AG04449 (cell line): ENCODE measurements at regions of chr19 and their contacts with region 1.

Region 1: DNA sequence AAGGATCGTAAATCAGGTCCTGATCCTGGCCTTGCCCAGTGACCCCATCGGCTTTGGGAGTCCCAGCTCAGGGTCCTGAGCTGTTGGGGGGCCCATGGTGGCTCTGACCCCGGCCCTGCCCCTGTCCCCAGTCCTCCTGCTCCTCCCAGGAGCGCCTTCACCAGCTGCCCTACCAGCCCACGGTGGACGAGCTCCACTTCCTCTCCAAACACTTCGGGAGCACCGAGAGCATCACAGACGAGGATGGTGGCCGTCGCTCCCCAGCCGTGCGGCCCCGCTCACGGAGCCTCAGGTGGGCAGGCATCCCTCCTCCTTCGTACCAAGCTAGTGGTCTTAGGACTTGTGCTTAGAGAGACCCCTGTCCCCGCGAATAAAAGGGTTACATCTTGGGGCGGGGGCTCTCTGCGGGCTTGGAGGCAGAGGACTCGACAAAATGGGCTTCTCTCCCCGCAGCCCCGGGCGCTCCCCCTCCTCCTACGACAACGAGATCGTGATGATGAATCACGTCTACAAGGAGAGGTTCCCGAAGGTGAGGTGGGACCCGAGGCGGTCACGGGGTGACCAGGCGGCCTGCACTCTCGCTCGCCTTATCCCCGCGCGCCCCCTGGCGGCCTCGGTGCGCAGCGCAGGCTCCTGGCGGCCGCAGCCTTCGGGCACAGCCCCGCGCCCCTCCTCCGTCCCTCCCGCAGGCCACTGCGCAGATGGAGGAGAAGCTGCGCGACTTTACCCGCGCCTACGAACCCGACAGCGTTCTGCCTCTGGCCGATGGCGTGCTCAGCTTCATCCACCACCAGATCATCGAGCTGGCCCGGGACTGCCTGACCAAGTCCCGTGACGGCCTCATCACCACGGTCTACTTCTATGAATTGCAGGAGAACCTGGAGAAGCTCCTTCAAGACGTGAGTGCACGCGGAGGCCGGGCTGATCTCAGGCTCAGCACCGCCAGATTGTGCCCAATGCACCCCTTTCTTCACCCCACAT is 9.1 kb downstream of the MAST1 start:
- DNase-seq: peak; percentile 5
- H3K4me3 ChIP-seq: peak overlapping the region; percentile 42
- CTCF ChIP-seq: peak; percentile 98

Region 2: DNA sequence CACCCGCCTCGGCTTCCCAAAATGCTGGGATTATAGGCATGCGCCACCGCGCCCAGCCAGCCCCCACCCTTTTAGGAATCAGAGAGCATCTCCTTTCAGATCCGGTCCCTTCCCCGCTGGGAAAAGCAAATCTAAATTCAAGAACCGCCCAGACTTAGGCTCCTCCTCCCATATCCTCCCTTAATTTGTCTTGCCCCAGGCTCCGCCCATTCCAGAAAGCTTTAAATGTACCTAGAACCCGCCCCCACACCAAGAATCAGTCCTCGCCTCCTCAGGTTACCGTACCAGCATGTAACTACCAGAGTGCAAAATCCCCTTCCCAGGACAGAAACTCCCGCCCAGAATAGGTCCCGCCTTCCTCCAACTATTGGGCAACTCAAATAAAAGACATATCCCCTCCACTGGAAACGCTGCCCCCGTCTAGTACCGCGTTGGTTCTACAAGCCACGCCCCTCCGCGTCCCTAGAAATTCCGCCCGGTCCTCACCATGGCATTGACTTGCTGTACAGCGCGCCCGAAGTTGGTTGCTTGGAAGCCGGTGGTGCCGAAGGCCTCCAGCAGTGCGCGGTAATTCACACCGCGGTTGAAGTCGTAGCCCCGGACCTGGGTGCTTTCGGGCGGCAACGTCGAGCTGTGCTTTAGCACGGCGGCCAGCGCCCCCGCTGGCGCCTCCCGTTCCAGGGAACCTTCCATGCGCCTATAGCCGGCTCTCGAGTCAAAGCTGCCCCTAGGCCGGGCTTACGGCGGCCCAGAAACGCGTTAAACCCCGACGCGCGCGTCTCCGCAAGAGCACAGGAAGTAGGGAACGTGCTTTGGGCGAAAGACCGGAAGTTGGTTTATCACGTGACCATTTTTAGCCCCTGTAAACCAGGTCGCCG is 166.1 kb before region 1 on chr19 and contains the start of gene DHPS:
- CTCF ChIA-PET with region 1: interaction called, 90 read pairs
- POLR2A ChIA-PET with region 1: no interaction called
- DNase-seq: peak; percentile 89
- H3K4me3 ChIP-seq: peak within 1 kb of the TSS; percentile 98
- CTCF ChIP-seq: no peak

Region 3: DNA sequence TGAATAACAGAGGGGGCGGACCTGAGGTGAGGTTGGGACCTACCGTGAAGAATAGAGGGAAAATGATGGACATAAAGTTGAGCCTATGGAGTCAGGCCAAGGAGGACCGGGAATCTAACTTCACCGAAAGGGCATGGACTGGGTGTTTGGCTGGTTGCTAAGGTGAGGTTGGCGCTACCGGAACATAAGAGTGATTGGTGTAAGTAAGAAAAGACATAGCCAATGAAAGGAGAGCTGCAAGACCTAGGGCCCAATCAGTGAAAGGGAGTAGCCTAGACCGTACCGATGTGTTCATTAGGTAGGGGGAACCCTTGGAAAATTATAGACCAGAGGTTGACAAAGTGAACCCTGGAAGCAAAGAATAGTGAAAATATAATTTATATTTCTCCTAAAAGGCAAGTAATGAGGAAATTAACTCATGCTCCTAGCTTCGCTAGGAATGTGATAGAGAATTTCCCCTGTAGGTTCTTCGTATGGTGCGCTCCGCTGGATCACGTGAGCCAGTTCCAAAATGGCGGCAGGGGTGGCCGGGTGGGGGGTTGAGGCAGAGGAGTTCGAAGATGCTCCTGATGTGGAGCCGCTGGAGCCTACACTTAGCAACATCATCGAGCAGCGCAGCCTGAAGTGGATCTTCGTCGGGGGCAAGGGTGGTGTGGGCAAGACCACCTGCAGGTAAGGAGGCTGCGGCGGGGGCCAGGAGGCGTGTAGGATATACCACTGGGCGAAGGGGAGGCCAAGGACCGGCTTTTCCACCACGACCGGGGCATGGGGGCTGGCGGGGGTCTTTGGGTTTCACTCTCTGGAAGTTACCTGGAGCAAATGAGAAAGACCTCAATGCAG is 110.2 kb before region 1 on chr19 and contains the start of gene GET3:
- CTCF ChIA-PET with region 1: interaction called, 12 read pairs
- POLR2A ChIA-PET with region 1: no interaction called
- DNase-seq: peak; percentile 100
- H3K4me3 ChIP-seq: peak within 1 kb of the TSS; percentile 93
- CTCF ChIP-seq: no peak

Region 4: DNA sequence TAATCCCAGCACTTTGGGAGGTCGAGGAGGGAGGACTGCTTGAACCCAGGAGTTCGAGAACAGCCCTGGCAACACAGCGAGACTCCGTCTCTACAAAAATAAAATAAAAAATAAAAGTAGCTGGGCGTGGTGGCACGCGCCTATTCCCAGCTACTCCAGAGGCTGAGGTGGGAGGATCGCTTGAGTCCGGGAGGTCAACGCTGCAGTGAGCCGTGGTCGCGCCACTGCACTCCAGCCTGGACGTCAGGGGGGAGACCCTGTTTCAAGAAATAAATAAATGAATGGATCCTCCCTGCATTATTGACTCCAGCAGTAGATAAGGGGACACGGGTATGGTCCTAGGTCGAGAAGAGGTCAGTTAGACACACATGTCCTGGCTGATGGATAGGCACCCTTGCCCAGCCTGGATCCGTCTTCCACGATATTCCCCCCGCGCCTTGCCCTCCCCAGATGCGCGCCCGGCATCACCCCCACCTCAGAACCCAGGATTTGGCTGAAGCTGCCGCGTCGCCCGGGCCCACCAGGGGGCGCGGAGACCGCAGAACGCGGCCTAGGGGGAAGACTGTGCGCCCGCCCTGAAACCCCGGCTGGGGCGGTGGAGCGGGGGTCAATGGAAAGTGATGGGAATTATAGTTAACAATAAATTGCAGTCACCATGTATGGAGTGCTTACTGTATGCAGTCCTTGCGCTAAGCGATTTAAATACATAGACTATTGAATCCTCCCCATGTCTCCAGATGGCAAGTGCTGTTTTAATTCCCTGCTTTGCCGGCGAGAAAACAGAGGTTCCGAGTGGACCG is 70.0 kb before region 1 on chr19:
- CTCF ChIA-PET with region 1: interaction called, 42 read pairs
- POLR2A ChIA-PET with region 1: no interaction called
- DNase-seq: no peak
- H3K4me3 ChIP-seq: peak overlapping the region; percentile 67
- CTCF ChIP-seq: peak; percentile 99

Region 5: GRCh38 chr19:12825254-12826131 is 22.0 kb before region 1 on chr19:
- CTCF ChIA-PET with region 1: interaction called, 23 read pairs
- POLR2A ChIA-PET with region 1: no interaction called
- DNase-seq: no peak
- H3K4me3 ChIP-seq: peak overlapping the region; percentile 12; the same call in 1 of the 2 replicates
- CTCF ChIP-seq: peak; percentile 46

Region 6: DNA sequence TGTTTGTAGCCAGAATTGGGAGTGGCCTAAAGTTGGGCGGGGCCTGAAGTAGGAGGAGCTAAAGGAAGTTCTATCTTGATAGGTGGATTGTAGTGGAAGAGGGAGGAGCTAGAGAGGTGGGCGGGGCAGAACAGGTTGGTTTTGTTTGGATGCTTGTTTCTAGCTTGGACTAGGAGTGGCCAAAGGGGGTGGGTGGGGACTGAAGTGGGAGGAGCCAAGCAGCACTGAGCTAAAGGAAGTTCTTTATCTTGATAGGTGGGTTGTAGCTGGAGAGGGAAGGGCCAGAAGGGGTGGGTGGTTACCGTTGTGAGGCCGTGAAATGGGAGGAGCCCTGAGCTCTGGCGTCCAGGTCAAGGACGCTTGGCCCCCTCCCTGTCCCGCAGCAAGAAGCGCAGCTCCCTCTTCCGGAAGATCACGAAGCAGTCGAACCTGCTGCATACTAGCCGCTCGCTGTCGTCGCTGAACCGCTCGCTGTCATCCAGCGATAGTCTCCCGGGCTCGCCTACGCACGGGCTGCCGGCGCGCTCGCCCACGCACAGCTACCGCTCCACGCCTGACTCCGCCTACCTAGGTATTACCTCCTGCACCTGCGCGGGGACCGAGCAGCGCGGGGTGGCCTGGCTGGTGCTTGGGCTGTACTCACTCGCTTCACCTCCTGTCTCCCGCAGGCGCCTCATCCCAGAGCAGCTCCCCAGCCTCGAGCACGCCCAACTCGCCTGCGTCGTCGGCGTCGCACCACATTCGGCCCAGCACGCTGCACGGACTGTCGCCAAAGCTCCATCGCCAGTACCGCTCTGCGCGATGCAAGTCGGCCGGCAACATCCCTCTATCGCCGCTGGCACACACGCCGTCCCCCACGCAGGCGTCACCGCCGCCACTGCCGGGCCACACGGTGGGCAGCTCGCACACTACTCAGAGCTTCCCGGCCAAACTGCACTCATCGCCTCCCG is 25.8 kb after region 1 on chr19:
- CTCF ChIA-PET with region 1: interaction called, 14 read pairs
- POLR2A ChIA-PET with region 1: no interaction called
- DNase-seq: no peak
- H3K4me3 ChIP-seq: peak overlapping the region; percentile 23
- CTCF ChIP-seq: no peak